ENCODE measurements at regions of chr1 and their contacts with region 1.

Region 1: DNA sequence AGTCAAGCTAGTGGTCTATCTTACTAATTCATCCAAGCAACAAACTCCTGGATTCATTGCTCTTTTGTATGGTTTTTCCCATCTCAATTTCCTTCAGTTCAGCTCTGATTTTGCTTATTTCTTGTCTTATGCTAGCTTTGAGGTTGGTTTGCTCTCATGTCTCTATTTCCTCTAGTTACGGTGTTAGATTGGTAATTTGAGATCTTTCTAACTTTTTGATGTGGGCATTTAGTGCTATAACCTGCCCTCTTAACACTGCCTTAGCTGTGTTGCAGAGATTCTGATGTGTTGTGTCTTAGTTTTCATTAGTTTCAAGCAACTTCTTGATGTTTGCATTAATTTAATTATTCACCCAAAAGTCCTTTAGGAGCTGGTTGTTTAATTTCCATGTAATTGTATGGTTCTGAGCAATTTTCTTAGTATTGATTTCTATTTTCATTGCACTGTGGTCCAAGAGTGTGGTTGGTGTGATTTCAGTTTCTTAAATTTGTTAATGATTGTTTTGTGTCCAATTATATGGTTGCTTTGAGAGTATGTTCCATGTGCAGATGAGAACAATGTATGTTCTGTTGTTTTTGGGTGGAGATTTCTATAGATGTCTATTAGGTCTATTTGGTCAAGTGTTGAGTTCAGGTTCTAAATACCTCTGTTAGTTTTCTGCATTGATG is 154.6 kb downstream of the PLPPR5 start:
- DNase-seq: no peak
- ATAC-seq: no peak
- H3K4me3 ChIP-seq: no peak overlapping the region
- H3K27ac ChIP-seq: no peak overlapping the region
- H3K4me1 ChIP-seq: no peaks in the 10 kb centered on the region
- H3K27me3 ChIP-seq: no peaks in the 10 kb centered on the region
- CTCF ChIP-seq: no peak

Region 2: GRCh38 chr1:100810360-100810759 is 1960.3 kb after region 1 on chr1:
- intact Hi-C with region 1: loop called in 1 of 3 experiments (anchors 5 kb)
- DNase-seq: no peak
- ATAC-seq: no peak
- H3K4me3 ChIP-seq: no peak overlapping the region
- H3K27ac ChIP-seq: no peak overlapping the region
- H3K4me1 ChIP-seq: no peaks in the 10 kb centered on the region
- H3K27me3 ChIP-seq: no peaks in the 10 kb centered on the region
- CTCF ChIP-seq: no peak

Measured in pancreas (tissue), 10 donors.